Aorta (tissue), 5 donors: ENCODE measurements at regions of chr20 and their contacts with region 1.

Region 1: GRCh38 chr20:13703265-13703664 is 64.5 kb upstream of the TASP1 start:
- DNase-seq: no peak
- ATAC-seq: no peak
- H3K4me3 ChIP-seq: no peak overlapping the region
- H3K27ac ChIP-seq: no peak overlapping the region
- H3K4me1 ChIP-seq: peaks cover 0 to 2% of the 10 kb centered on the region in 2 donors
- H3K27me3 ChIP-seq: no peaks in the 10 kb centered on the region

Region 2: DNA sequence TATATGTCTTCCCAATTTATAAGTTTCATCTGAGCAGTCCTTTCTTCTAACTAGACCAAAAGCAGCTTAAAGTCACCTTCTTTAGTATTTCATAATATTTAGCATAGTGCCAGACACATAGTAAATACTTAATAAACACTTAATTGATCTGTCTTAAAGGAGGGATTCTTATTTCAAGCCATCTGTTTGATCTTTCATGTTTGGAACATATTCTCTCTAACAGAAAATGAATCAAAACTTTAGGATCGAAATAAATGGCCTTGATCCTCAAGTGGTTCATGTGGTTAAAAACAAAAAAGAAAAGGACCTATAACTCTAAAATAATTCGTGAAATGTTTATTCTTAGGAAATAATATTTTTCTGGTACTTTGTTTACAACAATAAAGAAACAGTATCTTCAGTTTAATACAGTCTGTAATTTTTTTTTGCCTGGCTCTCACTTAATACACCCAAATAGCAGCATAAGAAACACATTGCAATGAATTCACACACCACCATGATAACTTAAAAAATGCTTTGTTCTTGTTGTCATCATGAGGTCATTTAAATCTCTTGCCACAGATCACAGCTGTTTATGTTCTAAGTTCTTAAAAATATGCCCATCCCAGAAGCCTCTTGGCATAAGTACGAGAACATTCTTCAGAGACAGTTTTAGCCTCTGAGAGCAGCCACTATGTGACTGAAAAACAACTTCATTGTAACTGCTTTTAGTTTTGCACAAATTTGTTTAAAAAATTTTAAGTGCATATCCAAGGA is 33.3 kb after region 1 on chr20:
- intact Hi-C with region 1: loop called (anchors 5 kb)
- DNase-seq: no peak
- ATAC-seq: peak; percentile 79
- H3K4me3 ChIP-seq: no peak overlapping the region
- H3K27ac ChIP-seq: no peak overlapping the region
- H3K4me1 ChIP-seq: peaks cover 0 to 2% of the 10 kb centered on the region in 2 donors
- H3K27me3 ChIP-seq: no peaks in the 10 kb centered on the region

Region 3: GRCh38 chr20:13744352-13744751 is 41.1 kb after region 1 on chr20:
- intact Hi-C with region 1: loop called (anchors 5 kb)
- DNase-seq: no peak
- ATAC-seq: no peak
- H3K4me3 ChIP-seq: no peak overlapping the region
- H3K27ac ChIP-seq: no peak overlapping the region
- H3K4me1 ChIP-seq: peaks cover 0 to 2% of the 10 kb centered on the region in 2 donors
- H3K27me3 ChIP-seq: no peaks in the 10 kb centered on the region